ENCODE measurements at regions of chr9 and their contacts with region 1.

Region 1: DNA sequence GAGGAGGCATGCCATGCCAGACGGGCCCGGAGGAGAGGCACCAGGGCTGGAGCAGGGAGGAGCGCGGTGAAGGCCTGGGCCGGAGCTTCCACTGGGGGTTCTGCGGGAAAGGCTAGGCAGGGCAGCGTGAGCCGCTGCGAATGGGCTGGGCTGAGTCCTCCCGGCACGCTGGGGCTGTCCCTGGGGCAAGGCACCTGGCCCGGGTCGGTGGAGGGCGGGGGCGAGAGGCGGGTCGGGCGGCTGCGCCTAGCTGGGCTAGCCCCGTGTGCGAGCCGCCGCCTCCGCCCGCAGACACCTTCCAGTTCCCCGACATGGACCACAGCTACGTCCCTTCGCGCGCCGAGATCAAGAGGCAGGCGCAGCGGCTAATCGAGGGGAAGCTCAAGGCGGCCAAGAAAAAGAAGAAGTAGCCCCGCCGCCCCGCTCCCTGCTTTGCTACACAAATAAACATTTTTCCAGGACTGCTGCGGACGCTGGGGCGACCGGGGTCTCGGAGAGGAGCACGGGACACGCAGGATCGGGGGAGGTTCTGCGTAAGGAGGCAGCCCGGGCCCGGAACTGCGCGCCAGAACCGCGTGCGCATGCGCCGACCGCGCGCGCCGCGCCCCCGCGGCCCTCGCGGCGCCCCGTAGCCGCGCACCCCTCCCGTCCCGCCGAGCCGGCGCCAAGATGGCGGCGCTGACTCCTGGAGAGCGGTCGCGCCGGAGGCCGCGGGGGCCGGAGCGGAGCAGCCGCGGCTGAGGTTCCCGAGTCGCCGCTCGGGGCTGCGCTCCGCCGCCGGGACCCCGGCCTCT is at the start of gene RABL6:
- DNase-seq: peak; percentile 78 to 90 (median 86)
- H3K4me3 ChIP-seq: peak within 1 kb of the TSS; percentile 61 to 74
- H3K4me3 Mint-ChIP-seq: peak within 1 kb of the TSS; percentile 87 to 93 (median 90)
- H3K27ac ChIP-seq: peak within 1 kb of the TSS; percentile 83
- H3K27ac Mint-ChIP-seq: peak within 1 kb of the TSS; percentile 91 to 96 (median 94)
- H3K4me1 ChIP-seq: peaks cover 40% of the 10 kb centered on the region
- H3K4me1 Mint-ChIP-seq: peaks cover 11 to 45% (median 30%) of the 10 kb centered on the region in 4 donors
- H3K27me3 ChIP-seq: no peaks in the 10 kb centered on the region
- H3K27me3 Mint-ChIP-seq: no peaks in the 10 kb centered on the region
- total RNA-seq, gene RABL6: 65.1 to 70.9 TPM

Region 2: GRCh38 chr9:136769710-136770191 is 37.7 kb before region 1 on chr9:
- CTCF ChIA-PET with region 1: no interaction called
- POLR2A ChIA-PET with region 1: no interaction called
- intact Hi-C with region 1: no loop called
- DNase-seq: peak in 4 of 5 donors; percentile 24 to 41 (median 36)
- H3K4me3 ChIP-seq: no peak overlapping the region
- H3K4me3 Mint-ChIP-seq: peak overlapping the region in 1 of 8 donors; percentile 54
- H3K27ac ChIP-seq: no peak overlapping the region
- H3K27ac Mint-ChIP-seq: no peak overlapping the region
- H3K4me1 ChIP-seq: peaks cover 5% of the 10 kb centered on the region
- H3K4me1 Mint-ChIP-seq: peaks cover 7 to 18% (median 11%) of the 10 kb centered on the region in 4 donors
- H3K27me3 ChIP-seq: no peaks in the 10 kb centered on the region
- H3K27me3 Mint-ChIP-seq: peaks cover 6 to 24% of the 10 kb centered on the region in 2 donors

Region 3: DNA sequence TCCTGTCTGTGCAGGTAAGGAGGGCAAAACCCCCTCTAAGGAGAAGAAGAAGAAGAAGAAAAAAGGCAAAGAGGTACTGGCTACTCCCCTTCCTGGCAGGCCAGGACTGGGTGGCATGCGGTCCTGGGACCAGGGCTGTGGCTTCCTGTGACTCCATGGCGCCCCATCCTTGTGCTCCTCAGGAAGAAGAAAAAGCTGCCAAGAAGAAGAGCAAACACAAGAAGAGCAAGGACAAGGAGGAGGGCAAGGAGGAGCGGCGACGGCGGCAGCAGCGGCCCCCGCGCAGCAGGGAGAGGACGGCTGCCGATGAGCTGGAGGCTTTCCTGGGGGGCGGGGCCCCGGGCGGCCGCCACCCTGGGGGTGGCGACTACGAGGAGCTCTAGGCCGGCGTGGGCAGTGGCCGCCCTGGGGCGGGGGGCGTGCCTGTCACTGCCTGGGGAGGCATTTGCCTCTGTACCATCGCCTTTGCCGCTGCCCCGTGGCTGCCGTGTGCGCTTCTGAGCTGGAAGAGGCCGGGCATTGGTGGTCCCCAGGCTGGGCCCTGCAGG is 32.7 kb after region 1 on chr9:
- CTCF ChIA-PET with region 1: interaction called, 11 read pairs
- POLR2A ChIA-PET with region 1: interaction called, 5 read pairs
- intact Hi-C with region 1: loop called (anchors 5 kb)
- DNase-seq: no peak
- H3K4me3 ChIP-seq: no peak overlapping the region
- H3K4me3 Mint-ChIP-seq: peak overlapping the region in 1 of 8 donors; percentile 74
- H3K27ac ChIP-seq: no peak overlapping the region
- H3K27ac Mint-ChIP-seq: peak overlapping the region in 2 of 7 donors; percentile 31 to 81
- H3K4me1 ChIP-seq: peaks cover 13% of the 10 kb centered on the region
- H3K4me1 Mint-ChIP-seq: peaks cover 5 to 18% (median 10%) of the 10 kb centered on the region in 4 donors
- H3K27me3 ChIP-seq: no peaks in the 10 kb centered on the region
- H3K27me3 Mint-ChIP-seq: peaks cover 3 to 4% of the 10 kb centered on the region in 2 donors

Measured in CD4-positive, alpha-beta memory T cell (primary cell).